AG04450 (cell line): ENCODE measurements at regions of chr14 and their contacts with region 1.

Region 1: GRCh38 chr14:49497725-49498348 is 88.3 kb downstream of the RPS29 start:
- DNase-seq: peak; percentile 37
- H3K4me3 ChIP-seq: no peak overlapping the region
- H3K27ac ChIP-seq: no peak overlapping the region
- H3K27me3 ChIP-seq: no peaks in the 10 kb centered on the region
- CTCF ChIP-seq: peak; percentile 92

Region 2: GRCh38 chr14:49483268-49483667 is 14.6 kb before region 1 on chr14:
- CTCF ChIA-PET with region 1: interaction called, 14 read pairs
- POLR2A ChIA-PET with region 1: no interaction called
- DNase-seq: no peak
- H3K4me3 ChIP-seq: no peak overlapping the region
- H3K27ac ChIP-seq: no peak overlapping the region
- H3K27me3 ChIP-seq: no peaks in the 10 kb centered on the region
- CTCF ChIP-seq: no peak

Region 3: GRCh38 chr14:49745191-49745590 is 247.4 kb after region 1 on chr14:
- CTCF ChIA-PET with region 1: interaction called, 11 read pairs
- POLR2A ChIA-PET with region 1: no interaction called
- DNase-seq: no peak
- H3K4me3 ChIP-seq: no peak overlapping the region
- H3K27ac ChIP-seq: no peak overlapping the region
- H3K27me3 ChIP-seq: no peaks in the 10 kb centered on the region
- CTCF ChIP-seq: no peak

Region 4: GRCh38 chr14:50321009-50321660 is 823.3 kb after region 1 on chr14:
- CTCF ChIA-PET with region 1: no interaction called
- POLR2A ChIA-PET with region 1: no interaction called
- DNase-seq: peak; percentile 86
- H3K4me3 ChIP-seq: peak overlapping the region; percentile 41
- H3K27ac ChIP-seq: peak overlapping the region; percentile 58
- H3K27me3 ChIP-seq: no peaks in the 10 kb centered on the region
- CTCF ChIP-seq: peak; percentile 95